ACHN (cell line): ENCODE measurements at regions of chr12 and their contacts with region 1.

Region 1: DNA sequence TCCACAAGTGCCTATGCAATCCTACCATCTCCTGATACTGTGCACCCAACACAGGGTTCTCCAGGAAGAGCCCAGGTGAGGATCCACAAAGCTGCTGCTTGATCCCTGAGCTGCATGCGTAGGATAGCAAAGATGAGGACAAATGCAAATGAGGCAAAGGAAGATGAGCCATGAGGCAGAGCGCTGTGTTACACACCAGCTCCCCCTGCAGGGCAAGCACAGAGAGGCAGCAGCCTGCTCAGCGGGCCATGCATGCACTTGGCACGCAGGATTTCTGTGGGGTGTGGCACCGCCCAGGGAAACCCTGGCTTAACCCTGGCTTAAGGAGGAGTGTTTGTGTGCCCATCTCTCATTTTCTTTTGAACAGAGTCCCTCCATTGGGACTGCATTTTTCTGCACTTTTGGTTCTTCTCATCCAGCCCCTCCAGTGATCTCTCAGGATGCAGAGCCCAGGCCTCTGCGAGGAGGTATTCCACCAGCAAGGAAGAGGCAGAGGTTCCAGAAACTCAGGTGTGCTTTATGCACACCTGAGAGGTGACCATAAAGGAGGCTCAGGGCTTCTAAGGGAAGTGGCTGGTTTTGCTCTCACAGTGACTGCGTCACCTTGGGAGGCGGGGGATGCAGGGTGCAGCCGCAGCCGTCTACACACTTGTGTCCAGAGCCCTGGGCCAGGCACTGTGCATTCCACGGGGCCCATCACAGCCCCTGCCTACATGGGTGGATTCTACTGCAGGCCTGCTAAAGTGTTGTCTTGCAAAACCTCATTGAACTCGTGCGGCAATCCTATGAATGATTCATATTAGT is 973.3 kb upstream of the TMEM132C start:
- DNase-seq: peak; percentile 84

Region 2: GRCh38 chr12:127108360-127109215 is 185.1 kb before region 1 on chr12:
- in situ Hi-C with region 1: loop called (anchors 25 kb)
- DNase-seq: peak; percentile 81

Region 3: DNA sequence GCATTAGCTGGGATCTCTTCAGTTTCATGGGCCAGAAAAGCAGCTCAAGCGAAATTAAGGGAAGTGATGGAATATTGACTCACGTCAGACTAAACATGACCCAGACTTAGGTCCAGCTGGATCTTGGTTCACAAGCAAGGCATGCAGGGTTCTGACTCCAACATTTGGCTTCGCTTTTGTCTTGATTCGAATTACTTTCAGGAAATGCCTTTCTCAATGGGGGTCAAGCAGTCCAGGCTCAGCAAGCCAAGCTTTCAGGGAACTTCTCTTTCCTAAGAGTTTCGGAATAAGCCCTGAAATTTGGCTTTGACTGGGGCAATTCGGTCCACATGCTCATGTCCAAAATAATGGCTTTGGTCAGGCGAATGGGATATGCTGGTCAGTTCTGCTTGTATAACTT is 294.5 kb after region 1 on chr12:
- in situ Hi-C with region 1: no loop called
- DNase-seq: no peak